ENCODE measurements at regions of chr20 and their contacts with region 1.

Region 1: DNA sequence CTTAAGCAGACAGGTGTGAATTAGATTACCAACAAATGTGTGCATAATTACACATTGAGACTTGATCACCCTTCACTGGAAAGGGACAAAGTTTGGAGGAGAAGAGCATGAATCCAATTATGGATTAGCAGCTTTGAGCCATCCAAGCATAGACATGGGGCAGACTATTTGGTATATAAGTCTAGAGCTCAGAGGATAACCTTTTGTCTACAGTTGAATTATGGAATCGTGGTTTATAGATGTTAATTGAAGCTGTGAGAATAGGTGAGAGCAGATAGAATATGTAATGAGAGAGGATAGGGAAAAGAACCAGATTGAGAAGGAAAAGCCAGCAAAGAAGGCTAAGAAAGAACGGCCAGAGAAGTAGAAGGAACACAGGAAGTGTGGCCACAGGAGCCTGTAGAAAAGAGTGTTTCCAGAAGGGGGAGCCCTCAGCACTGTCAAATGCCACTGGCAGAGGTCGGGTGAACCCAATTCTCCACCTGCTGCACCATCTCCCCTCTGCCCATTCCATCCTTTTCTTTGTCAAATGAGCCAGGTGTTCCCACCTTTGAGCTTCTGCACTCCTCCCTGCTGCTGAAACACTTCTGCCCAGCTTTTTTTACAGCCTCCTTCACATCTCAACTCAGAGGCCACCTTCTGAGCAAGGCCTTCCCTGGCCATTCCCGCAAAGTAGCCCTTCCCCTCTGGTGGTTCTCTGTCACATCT is 7.3 kb downstream of the DNTTIP1 start:
- DNase-seq: peak; percentile 81
- H3K4me3 Mint-ChIP-seq: no peak overlapping the region
- H3K27ac Mint-ChIP-seq: peak overlapping the region; percentile 46
- H3K4me1 Mint-ChIP-seq: peaks cover 8% of the 10 kb centered on the region
- H3K27me3 Mint-ChIP-seq: no peaks in the 10 kb centered on the region

Region 2: DNA sequence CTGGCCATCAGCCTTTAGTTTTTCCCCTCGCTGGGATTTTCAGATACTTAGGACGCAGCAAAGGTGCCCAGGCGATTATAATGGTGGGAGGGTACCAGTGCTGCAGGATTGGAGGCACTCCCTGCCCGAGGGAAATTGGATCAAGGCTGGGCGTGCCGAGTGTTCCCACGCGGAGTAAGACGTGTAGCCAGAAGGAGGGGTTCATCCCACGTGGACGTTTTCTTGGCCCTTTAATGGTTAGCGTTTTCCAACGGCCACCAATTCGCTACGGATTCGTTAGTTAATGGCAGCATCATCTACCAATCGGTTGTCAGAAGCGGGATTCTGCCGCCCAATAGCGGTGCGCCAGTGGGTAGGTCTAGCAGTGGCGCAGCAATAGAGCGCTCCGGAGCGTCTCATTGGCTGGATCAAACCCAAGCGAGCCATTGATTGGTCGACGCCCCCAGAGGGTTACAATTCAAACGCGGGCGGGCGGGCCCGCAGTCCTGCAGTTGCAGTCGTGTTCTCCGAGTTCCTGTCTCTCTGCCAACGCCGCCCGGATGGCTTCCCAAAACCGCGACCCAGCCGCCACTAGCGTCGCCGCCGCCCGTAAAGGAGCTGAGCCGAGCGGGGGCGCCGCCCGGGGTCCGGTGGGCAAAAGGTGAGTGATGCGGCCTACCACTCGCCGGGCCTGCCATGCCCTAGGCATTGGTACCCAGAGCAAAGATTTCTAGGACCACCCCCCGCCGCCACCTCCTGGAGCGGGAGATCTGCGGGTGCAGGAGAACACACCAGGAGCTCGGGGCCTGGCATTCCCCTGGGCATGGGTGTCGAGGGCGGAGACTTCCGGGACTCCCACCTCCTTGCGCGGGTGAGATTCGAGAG is 13.3 kb after region 1 on chr20 and contains the start of gene UBE2C:
- CTCF ChIA-PET with region 1: interaction called, 21 read pairs
- DNase-seq: peak; percentile 98
- H3K4me3 Mint-ChIP-seq: peak within 1 kb of the TSS; percentile 91
- H3K27ac Mint-ChIP-seq: peak within 1 kb of the TSS; percentile 86
- H3K4me1 Mint-ChIP-seq: peaks cover 39% of the 10 kb centered on the region
- H3K27me3 Mint-ChIP-seq: no peaks in the 10 kb centered on the region

Region 3: GRCh38 chr20:45823949-45824835 is 25.1 kb after region 1 on chr20:
- CTCF ChIA-PET with region 1: interaction called, 11 read pairs
- DNase-seq: peak; percentile 72
- H3K4me3 Mint-ChIP-seq: peak overlapping the region; percentile 34
- H3K27ac Mint-ChIP-seq: no peak overlapping the region
- H3K4me1 Mint-ChIP-seq: peaks cover 18% of the 10 kb centered on the region
- H3K27me3 Mint-ChIP-seq: peaks cover 64% of the 10 kb centered on the region

Region 4: GRCh38 chr20:45934586-45935415 is 135.7 kb after region 1 on chr20 and contains the start of gene PCIF1:
- CTCF ChIA-PET with region 1: interaction called, 19 read pairs
- DNase-seq: peak; percentile 98
- H3K4me3 Mint-ChIP-seq: peak within 1 kb of the TSS; percentile 99
- H3K27ac Mint-ChIP-seq: peak within 1 kb of the TSS; percentile 97
- H3K4me1 Mint-ChIP-seq: peaks cover 37% of the 10 kb centered on the region
- H3K27me3 Mint-ChIP-seq: no peaks in the 10 kb centered on the region

Region 5: GRCh38 chr20:45963059-45964005 is 164.2 kb after region 1 on chr20:
- CTCF ChIA-PET with region 1: interaction called, 21 read pairs
- DNase-seq: peak; percentile 16
- H3K4me3 Mint-ChIP-seq: no peak overlapping the region
- H3K27ac Mint-ChIP-seq: no peak overlapping the region
- H3K4me1 Mint-ChIP-seq: no peaks in the 10 kb centered on the region
- H3K27me3 Mint-ChIP-seq: no peaks in the 10 kb centered on the region

Region 6: GRCh38 chr20:45987108-45987780 is 188.2 kb after region 1 on chr20:
- CTCF ChIA-PET with region 1: interaction called, 10 read pairs
- DNase-seq: peak; percentile 85
- H3K4me3 Mint-ChIP-seq: no peak overlapping the region
- H3K27ac Mint-ChIP-seq: no peak overlapping the region
- H3K4me1 Mint-ChIP-seq: peaks cover 13% of the 10 kb centered on the region
- H3K27me3 Mint-ChIP-seq: peaks cover 69% of the 10 kb centered on the region